Ascending aorta (tissue), 2 donors: ENCODE measurements at regions of chrX and their contacts with region 1.

Region 1: DNA sequence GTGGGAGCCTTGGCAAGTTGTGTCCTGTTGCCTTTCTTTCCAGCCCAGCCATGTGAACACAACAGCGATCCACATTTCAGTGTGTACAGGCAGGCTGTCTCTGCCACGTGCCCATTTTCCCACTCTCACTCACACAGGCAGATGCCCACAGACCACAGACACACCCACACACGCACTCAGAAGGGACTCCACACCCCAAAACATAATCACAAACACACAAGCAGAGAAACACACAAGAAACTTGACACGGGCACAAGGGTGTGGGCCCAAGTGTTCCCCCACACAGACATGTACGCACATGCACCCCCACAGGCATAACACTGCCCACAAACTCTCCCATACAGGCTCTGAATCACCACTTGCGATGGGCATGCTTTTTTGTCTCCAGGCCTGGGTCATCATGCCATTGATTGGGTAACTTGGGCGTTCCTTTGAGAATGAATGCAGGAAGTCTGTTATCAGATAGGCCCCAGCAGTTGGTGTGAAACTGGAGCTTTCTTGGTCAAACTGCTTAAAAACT is 84.3 kb downstream of the NBDY start:
- DNase-seq: peak in 1 of 2 donors; percentile 74
- H3K4me3 ChIP-seq: no peak overlapping the region
- H3K27ac ChIP-seq: peak overlapping the region in 1 of 2 donors; percentile 29
- H3K4me1 ChIP-seq: peaks cover 0 to 6% of the 10 kb centered on the region in 2 donors
- H3K27me3 ChIP-seq: no peaks in the 10 kb centered on the region
- CTCF ChIP-seq: no peak

Region 2: DNA sequence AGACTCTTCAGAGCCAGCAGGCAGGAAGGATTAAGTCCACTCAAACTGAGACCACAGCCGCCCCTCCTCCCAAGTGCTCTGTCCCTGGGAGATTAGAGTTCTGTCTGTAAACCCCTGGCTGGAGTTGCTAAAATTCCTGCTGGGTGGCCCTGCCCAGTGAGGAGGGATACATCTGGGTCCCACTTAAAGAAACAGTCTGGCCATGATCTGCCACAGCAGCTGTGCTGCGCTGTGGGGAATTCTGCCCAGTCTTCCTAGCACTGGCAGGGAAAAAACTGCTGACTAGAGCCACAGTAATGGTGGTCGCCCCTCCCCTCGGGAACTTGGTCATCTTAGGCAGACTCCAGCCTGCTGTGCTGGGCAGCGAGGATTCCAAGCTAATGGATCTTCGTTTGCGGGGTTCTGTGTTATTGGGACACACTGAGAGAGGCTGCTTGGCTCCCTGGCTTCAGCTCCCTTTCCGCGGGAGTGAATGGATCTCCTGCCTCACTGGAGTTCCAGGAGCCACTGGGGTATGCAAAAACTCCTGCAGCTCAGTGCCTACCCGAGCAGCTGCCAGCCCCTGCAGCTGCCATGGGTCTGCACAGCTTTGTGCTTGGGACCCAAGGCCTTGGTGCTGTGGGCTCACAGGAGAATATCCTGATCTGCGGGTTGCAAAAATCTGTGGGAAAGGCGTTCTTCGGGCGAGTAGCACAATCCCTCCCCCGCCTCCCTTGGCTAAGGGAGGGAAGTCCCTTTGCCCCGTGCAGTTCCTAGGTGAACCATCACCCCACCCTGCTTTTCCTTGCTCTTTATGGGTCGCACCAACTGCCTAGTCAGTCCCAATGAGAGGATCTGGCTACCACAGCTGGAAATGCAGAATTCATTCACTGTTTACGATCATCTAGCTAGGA is 794.2 kb after region 1 on chrX:
- intact Hi-C with region 1: no loop called
- DNase-seq: no peak
- H3K4me3 ChIP-seq: no peak overlapping the region
- H3K27ac ChIP-seq: no peak overlapping the region
- H3K4me1 ChIP-seq: no peaks in the 10 kb centered on the region
- H3K27me3 ChIP-seq: no peaks in the 10 kb centered on the region
- CTCF ChIP-seq: no peak

Region 3: DNA sequence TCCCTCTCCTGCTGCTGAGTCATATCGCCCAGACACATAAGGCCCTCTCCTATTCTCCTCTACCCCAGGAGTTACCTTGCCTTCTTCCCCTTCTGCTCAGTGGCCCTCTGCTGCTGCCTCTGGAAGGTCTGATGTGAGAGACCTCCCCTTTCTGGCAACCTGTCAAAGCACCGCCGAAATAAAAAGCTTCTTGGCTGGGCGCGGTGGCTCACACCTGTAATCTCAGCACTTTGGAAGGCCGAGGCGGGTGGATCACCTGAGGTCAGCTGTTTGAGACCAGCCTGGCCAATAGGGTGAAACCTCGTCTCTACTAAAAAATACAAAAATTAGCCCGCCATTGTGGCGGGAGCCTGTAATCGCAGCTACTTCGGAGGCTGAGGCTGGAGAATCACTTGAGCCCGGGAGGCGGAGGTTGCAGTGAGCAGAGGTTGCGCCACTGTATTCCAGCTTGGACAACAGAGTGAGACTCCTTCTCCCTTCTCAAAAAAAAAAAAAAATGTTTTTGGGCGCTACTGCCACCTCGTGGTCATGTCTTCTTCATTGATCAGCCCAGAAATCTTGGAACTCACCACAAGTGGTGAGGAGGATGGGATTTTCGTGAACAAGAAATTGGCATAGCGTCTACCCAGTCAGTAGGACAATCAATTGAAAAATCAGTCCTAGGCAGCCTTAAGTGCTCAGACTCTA is 1105.5 kb after region 1 on chrX:
- intact Hi-C with region 1: loop called (anchors 10 kb)
- DNase-seq: no peak
- H3K4me3 ChIP-seq: peak overlapping the region in 1 of 2 donors; percentile 7
- H3K27ac ChIP-seq: no peak overlapping the region
- H3K4me1 ChIP-seq: no peaks in the 10 kb centered on the region
- H3K27me3 ChIP-seq: no peaks in the 10 kb centered on the region
- CTCF ChIP-seq: peak in 2 of 3 experiments; percentile 32 to 52